ENCODE measurements at regions of chr21 and their contacts with region 1.

Region 1: DNA sequence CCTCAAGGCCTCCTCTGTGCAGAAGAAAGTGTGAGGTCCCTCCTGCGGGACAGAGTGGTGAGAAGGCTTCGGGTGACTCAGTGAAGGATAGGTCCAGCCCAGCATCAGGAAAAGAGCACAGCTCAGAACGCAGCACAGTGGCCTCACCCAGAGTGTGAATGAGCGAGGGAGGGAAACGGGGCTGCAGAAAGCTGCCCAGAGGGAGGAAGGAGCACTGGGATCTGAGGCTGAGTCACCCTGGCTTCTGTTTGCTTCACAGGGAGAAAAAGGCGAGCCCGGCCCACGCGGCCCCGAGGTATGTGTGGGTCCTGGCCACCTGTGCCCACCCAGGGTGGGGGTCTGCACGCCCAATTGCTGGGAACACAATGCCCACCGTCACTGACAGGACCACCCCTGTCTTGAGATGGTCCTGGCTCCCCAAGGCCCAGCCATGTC is 24.3 kb downstream of the COL6A2 start:
- DNase-seq: peak; percentile 11 to 20
- H3K4me3 ChIP-seq: no peak overlapping the region
- H3K27ac ChIP-seq: peak overlapping the region in 1 of 2 donors; percentile 22
- H3K4me1 ChIP-seq: no peaks in the 10 kb centered on the region
- H3K27me3 ChIP-seq: no peaks in the 10 kb centered on the region
- CTCF ChIP-seq: no peak
- POLR2A ChIP-seq: no peak

Region 2: GRCh38 chr21:45179568-45180245 is 942.5 kb before region 1 on chr21:
- intact Hi-C with region 1: loop called (anchors 10 kb)
- DNase-seq: no peak
- H3K4me3 ChIP-seq: no peak overlapping the region
- H3K27ac ChIP-seq: no peak overlapping the region
- H3K4me1 ChIP-seq: no peaks in the 10 kb centered on the region
- H3K27me3 ChIP-seq: no peaks in the 10 kb centered on the region
- CTCF ChIP-seq: no peak
- POLR2A ChIP-seq: no peak

Region 3: DNA sequence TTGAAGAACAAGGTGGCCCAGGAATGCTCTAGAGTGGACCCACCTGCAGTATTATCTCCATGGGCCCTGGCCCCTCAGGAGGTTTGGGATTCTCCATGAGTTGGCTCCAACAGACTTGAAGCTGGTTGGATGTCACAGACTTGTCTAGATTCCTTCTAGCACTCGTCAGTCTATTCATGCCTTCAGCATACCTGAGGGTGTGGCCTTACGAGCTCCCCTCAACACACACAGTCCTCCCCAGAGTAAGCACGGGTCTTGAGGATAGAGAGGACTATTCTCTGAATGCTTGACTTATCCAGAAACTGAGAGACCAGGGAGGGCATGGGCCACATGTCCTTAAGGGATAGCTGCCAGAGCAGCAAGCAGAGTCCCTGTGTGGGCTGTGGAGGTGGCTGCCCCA is 186.6 kb before region 1 on chr21:
- intact Hi-C with region 1: no loop called
- DNase-seq: no peak
- H3K4me3 ChIP-seq: no peak overlapping the region
- H3K27ac ChIP-seq: no peak overlapping the region
- H3K4me1 ChIP-seq: no peaks in the 10 kb centered on the region
- H3K27me3 ChIP-seq: no peaks in the 10 kb centered on the region
- CTCF ChIP-seq: no peak
- POLR2A ChIP-seq: no peak

Region 4: DNA sequence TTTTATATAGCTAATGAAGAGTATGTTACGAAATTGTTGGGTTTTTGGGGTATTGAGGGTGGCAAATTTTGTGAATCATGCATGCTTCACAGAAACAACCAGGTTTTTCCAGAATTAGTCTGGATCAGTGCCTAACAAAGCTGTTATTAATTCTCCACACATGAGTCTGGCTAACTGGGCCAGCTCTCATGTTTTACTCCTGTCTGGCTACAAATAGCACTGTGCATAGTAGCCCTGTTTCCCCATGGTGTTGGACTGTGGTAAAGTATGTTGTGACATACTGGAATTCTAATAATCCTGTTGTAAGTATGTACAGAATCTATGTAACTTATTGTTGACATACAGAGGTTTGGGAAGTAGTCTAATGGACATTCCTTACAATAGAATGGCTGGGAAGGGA is 446.8 kb after region 1 on chr21:
- intact Hi-C with region 1: no loop called
- DNase-seq: no peak
- H3K4me3 ChIP-seq: no peak overlapping the region
- H3K27ac ChIP-seq: no peak overlapping the region
- H3K4me1 ChIP-seq: no peaks in the 10 kb centered on the region
- H3K27me3 ChIP-seq: no peaks in the 10 kb centered on the region
- CTCF ChIP-seq: no peak
- POLR2A ChIP-seq: no peak

Measured in uterus (tissue), 4 donors.